B cell (primary cell): ENCODE measurements at regions of chr14 and their contacts with region 1.

Region 1: GRCh38 chr14:50139192-50139591 is 22.8 kb upstream of the VCPKMT start:
- DNase-seq: no peak
- ATAC-seq: no peak
- H3K4me3 ChIP-seq: no peak overlapping the region
- H3K4me3 Mint-ChIP-seq: no peak overlapping the region
- H3K27ac ChIP-seq: no peak overlapping the region
- H3K27ac Mint-ChIP-seq: no peak overlapping the region
- H3K4me1 ChIP-seq: no peaks in the 10 kb centered on the region
- H3K4me1 Mint-ChIP-seq: no peaks in the 10 kb centered on the region
- H3K27me3 ChIP-seq: no peaks in the 10 kb centered on the region
- H3K27me3 Mint-ChIP-seq: no peaks in the 10 kb centered on the region
- CTCF ChIP-seq: no peak

Region 2: GRCh38 chr14:50023671-50024490 is 115.3 kb before region 1 on chr14:
- CTCF ChIA-PET with region 1: no interaction called
- POLR2A ChIA-PET with region 1: no interaction called
- intact Hi-C with region 1: no loop called
- DNase-seq: no peak
- ATAC-seq: no peak
- H3K4me3 ChIP-seq: no peak overlapping the region
- H3K4me3 Mint-ChIP-seq: no peak overlapping the region
- H3K27ac ChIP-seq: no peak overlapping the region
- H3K27ac Mint-ChIP-seq: no peak overlapping the region
- H3K4me1 ChIP-seq: peaks cover 9 to 10% of the 10 kb centered on the region in 2 donors
- H3K4me1 Mint-ChIP-seq: peaks cover 21% of the 10 kb centered on the region
- H3K27me3 ChIP-seq: no peaks in the 10 kb centered on the region
- H3K27me3 Mint-ChIP-seq: no peaks in the 10 kb centered on the region
- CTCF ChIP-seq: no peak

Region 3: DNA sequence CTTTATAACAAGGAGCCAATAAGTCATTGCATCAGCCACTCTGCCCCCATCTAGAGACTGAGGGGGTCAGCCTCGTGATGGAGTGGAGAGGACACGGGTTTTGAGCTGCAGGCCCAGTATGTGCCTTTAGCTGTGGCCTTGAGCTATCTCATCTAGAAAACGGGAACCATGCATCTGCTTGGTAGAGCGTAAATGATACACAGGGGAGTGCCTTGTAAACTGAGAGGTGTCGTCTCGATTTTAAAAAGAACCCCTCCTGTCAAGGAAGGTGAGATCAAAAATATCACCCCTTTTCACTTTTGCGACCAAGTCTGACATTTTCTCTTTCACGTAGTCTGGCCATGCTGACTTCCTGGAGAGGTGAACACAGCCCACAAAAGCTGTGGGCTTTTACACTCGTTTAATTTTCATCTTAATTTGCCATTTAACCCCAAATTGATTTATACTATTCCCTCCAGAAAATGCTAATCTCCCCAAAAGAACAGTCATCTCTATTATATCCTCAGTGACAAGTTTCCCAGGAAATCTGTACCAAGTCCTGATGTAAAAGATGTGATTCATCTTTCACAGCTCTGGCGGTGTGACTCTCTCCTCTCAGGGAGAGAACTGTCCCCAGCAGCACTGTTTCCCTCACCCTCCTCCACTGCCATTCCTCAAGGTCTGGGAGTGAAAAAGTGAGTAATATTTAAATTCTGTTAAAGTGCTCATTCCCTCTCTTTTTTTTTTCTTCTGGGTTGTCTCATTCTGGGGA is 53.4 kb before region 1 on chr14:
- CTCF ChIA-PET with region 1: no interaction called
- POLR2A ChIA-PET with region 1: no interaction called
- intact Hi-C with region 1: no loop called
- DNase-seq: peak; percentile 91
- ATAC-seq: peak; percentile 75
- H3K4me3 ChIP-seq: peak overlapping the region in 3 of 5 experiments; percentile 18 to 48 (median 24)
- H3K4me3 Mint-ChIP-seq: peak overlapping the region; percentile 82
- H3K27ac ChIP-seq: peak overlapping the region; percentile 95 to 100
- H3K27ac Mint-ChIP-seq: peak overlapping the region; percentile 96
- H3K4me1 ChIP-seq: peaks cover 85 to 91% of the 10 kb centered on the region in 2 donors
- H3K4me1 Mint-ChIP-seq: peaks cover 87% of the 10 kb centered on the region
- H3K27me3 ChIP-seq: no peaks in the 10 kb centered on the region
- H3K27me3 Mint-ChIP-seq: no peaks in the 10 kb centered on the region
- CTCF ChIP-seq: no peak

Region 4: GRCh38 chr14:50124919-50125318 is 14.3 kb before region 1 on chr14:
- CTCF ChIA-PET with region 1: no interaction called
- POLR2A ChIA-PET with region 1: no interaction called
- intact Hi-C with region 1: no loop called
- DNase-seq: no peak
- ATAC-seq: no peak
- H3K4me3 ChIP-seq: no peak overlapping the region
- H3K4me3 Mint-ChIP-seq: no peak overlapping the region
- H3K27ac ChIP-seq: no peak overlapping the region
- H3K27ac Mint-ChIP-seq: no peak overlapping the region
- H3K4me1 ChIP-seq: no peaks in the 10 kb centered on the region
- H3K4me1 Mint-ChIP-seq: no peaks in the 10 kb centered on the region
- H3K27me3 ChIP-seq: no peaks in the 10 kb centered on the region
- H3K27me3 Mint-ChIP-seq: no peaks in the 10 kb centered on the region
- CTCF ChIP-seq: no peak

Region 5: DNA sequence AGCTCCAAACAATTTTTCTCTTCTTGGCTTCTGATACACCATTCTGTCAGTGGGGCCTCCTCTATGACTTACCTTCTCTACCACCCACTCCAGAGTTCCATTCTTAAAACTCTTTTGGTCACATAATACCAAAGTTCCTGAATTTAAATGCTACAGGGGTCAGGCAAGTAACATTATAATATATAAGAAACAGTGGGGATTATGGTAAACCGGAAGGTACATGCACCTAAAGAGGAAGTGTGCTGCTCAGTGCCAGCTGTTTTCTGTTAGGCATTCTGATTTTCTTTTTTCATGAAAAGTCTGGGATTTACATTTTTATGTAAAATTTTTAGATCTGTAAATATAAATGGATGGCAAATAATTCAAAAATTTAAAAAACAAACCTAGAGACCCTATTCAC is 52.3 kb after region 1 on chr14:
- CTCF ChIA-PET with region 1: no interaction called
- POLR2A ChIA-PET with region 1: interaction called, 3 read pairs
- intact Hi-C with region 1: loop called (anchors 10 kb)
- DNase-seq: no peak
- ATAC-seq: no peak
- H3K4me3 ChIP-seq: no peak overlapping the region
- H3K4me3 Mint-ChIP-seq: no peak overlapping the region
- H3K27ac ChIP-seq: no peak overlapping the region
- H3K27ac Mint-ChIP-seq: no peak overlapping the region
- H3K4me1 ChIP-seq: no peaks in the 10 kb centered on the region
- H3K4me1 Mint-ChIP-seq: peaks cover 1% of the 10 kb centered on the region
- H3K27me3 ChIP-seq: no peaks in the 10 kb centered on the region
- H3K27me3 Mint-ChIP-seq: no peaks in the 10 kb centered on the region
- CTCF ChIP-seq: no peak